Endothelial cell of umbilical vein (primary cell): ENCODE measurements at regions of chr4 and their contacts with region 1.

Region 1: GRCh38 chr4:176920694-176921093 is 128.0 kb upstream of the VEGFC start:
- DNase-seq: peak; percentile 91
- H3K4me3 ChIP-seq: peak overlapping the region in 1 of 3 experiments; percentile 41
- H3K27ac ChIP-seq: peak overlapping the region; percentile 66
- H3K4me1 ChIP-seq: peaks cover 43% of the 10 kb centered on the region
- H3K27me3 ChIP-seq: no peaks in the 10 kb centered on the region
- CTCF ChIP-seq: no peak
- POLR2A ChIP-seq: no peak

Region 2: GRCh38 chr4:176077561-176077960 is 843.1 kb before region 1 on chr4:
- CTCF ChIA-PET with region 1: no interaction called
- POLR2A ChIA-PET with region 1: no interaction called
- dilution Hi-C with region 1: no loop called
- intact Hi-C with region 1: no loop called
- DNase-seq: no peak
- H3K4me3 ChIP-seq: no peak overlapping the region
- H3K27ac ChIP-seq: no peak overlapping the region
- H3K4me1 ChIP-seq: no peaks in the 10 kb centered on the region
- H3K27me3 ChIP-seq: no peaks in the 10 kb centered on the region
- CTCF ChIP-seq: no peak
- POLR2A ChIP-seq: no peak

Region 3: GRCh38 chr4:176838611-176839433 is 81.9 kb before region 1 on chr4:
- CTCF ChIA-PET with region 1: no interaction called
- POLR2A ChIA-PET with region 1: no interaction called
- dilution Hi-C with region 1: no loop called
- intact Hi-C with region 1: loop called (anchors 1 kb)
- DNase-seq: peak; percentile 77
- H3K4me3 ChIP-seq: no peak overlapping the region
- H3K27ac ChIP-seq: peak overlapping the region; percentile 71
- H3K4me1 ChIP-seq: peaks cover 74% of the 10 kb centered on the region
- H3K27me3 ChIP-seq: no peaks in the 10 kb centered on the region
- CTCF ChIP-seq: no peak
- POLR2A ChIP-seq: no peak

Region 4: GRCh38 chr4:176902710-176903323 is 17.9 kb before region 1 on chr4:
- CTCF ChIA-PET with region 1: no interaction called
- POLR2A ChIA-PET with region 1: no interaction called
- dilution Hi-C with region 1: no loop called
- intact Hi-C with region 1: loop called (anchors 2 kb)
- DNase-seq: peak; percentile 57
- H3K4me3 ChIP-seq: no peak overlapping the region
- H3K27ac ChIP-seq: peak overlapping the region; percentile 55
- H3K4me1 ChIP-seq: peaks cover 15% of the 10 kb centered on the region
- H3K27me3 ChIP-seq: no peaks in the 10 kb centered on the region
- CTCF ChIP-seq: no peak
- POLR2A ChIP-seq: no peak

Region 5: GRCh38 chr4:176988226-176988625 is 67.5 kb after region 1 on chr4:
- CTCF ChIA-PET with region 1: no interaction called
- POLR2A ChIA-PET with region 1: no interaction called
- dilution Hi-C with region 1: no loop called
- intact Hi-C with region 1: loop called (anchors 1 kb)
- DNase-seq: peak; percentile 92
- H3K4me3 ChIP-seq: no peak overlapping the region
- H3K27ac ChIP-seq: peak overlapping the region; percentile 55
- H3K4me1 ChIP-seq: peaks cover 5% of the 10 kb centered on the region
- H3K27me3 ChIP-seq: no peaks in the 10 kb centered on the region
- CTCF ChIP-seq: no peak
- POLR2A ChIP-seq: no peak